ENCODE measurements at regions of chr10 and their contacts with region 1.

Region 1: DNA sequence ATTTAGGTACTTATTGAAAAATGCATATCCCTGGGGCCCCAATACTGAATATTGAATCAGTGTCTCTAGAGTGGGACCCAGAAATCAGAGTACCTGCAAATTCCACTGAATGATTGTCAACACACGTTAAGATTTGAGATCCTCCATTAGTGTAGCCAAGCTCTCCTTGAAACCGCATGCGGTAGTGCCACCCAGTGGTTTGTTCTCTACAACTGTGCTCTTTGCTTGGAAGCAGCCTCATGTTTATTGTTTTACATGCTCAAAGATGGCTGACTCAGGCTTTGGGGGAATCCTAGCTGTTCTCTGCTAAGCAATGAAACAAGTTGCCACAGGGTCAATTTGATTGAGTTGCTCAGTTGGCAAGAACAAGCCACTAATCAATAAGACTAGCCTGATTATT is 340.2 kb upstream of the CELF2 start:
- DNase-seq: peak; percentile 81
- ATAC-seq: peak; percentile 86
- H3K4me3 Mint-ChIP-seq: no peak overlapping the region
- H3K27ac Mint-ChIP-seq: no peak overlapping the region
- H3K4me1 Mint-ChIP-seq: peaks cover 16% of the 10 kb centered on the region
- H3K27me3 Mint-ChIP-seq: peaks cover 2% of the 10 kb centered on the region

Region 2: GRCh38 chr10:9331583-9332008 is 1345.9 kb before region 1 on chr10:
- CTCF ChIA-PET with region 1: no interaction called
- POLR2A ChIA-PET with region 1: no interaction called
- intact Hi-C with region 1: loop called in 1 of 2 experiments (anchors 5 kb)
- DNase-seq: no peak
- ATAC-seq: no peak
- H3K4me3 Mint-ChIP-seq: no peak overlapping the region
- H3K27ac Mint-ChIP-seq: no peak overlapping the region
- H3K4me1 Mint-ChIP-seq: no peaks in the 10 kb centered on the region
- H3K27me3 Mint-ChIP-seq: peaks cover 29% of the 10 kb centered on the region

Region 3: DNA sequence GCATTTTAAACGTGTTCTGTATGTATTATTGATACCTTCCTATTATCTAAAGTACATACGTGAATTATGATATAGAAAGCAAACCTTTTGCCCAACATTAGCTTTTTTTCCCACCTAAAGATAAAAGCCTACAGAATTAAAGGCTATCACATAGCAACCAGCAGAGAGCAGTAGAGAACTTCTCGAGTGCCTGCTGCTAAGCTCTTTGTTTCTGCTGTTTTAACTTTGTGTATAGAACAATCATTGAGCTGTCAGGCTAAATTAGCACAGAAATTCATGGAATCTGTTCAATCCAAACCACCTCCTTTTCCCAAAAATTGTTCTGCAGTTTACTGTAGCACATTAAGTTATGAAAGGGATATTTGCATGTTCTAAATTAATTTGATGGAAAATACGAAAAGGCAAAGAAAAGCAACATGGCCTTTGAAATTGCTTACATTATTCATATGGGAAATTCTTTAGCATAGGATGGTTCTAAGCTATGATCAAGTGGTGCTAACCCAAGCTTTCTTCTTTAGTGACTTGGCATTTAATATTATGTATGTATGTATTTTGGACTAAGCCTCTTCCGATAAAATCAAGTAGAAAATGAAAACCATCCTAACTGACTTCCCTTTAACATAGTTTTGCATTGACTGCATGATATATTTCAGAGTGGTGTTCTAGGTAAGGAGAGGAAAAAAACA is 1334.5 kb before region 1 on chr10:
- CTCF ChIA-PET with region 1: interaction called, 5 read pairs
- POLR2A ChIA-PET with region 1: no interaction called
- intact Hi-C with region 1: loop called in 1 of 2 experiments (anchors 5 kb)
- DNase-seq: no peak
- ATAC-seq: peak; percentile 26
- H3K4me3 Mint-ChIP-seq: no peak overlapping the region
- H3K27ac Mint-ChIP-seq: no peak overlapping the region
- H3K4me1 Mint-ChIP-seq: peaks cover 12% of the 10 kb centered on the region
- H3K27me3 Mint-ChIP-seq: no peaks in the 10 kb centered on the region

Region 4: DNA sequence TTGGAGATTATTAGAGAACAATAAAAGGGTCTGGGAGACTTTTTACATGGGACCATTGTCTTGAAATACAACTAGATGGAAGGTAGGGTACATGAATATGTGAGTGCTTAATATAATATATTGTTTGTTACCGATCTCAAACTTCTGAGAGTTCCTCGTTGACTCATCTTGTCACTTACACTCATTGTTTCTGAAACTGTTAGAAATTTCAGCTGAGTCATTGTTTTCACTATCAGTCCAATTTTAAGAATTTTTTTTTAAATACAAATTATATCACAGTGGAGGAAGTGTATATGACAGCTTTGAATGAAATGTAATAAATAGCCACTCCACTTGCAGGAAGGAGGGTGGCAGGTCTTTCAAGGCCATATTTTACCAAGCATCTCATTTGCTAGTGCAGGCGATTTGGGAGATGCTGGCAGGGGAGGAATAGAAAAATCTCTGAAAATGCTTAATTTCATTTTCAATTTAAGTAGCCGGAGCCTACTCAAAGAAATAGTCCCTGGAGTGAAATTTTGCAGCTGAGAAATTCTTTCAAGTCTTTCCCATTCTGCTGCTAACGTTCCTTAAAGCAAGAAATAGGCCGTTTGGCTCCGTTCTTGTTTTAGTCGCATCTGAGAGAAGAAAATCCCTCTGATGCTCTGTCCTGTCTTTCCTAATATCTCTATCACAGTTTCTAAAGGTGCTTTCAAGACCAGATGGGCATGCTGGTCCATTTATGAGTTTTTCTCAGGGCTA is 1064.0 kb before region 1 on chr10:
- CTCF ChIA-PET with region 1: no interaction called
- POLR2A ChIA-PET with region 1: no interaction called
- intact Hi-C with region 1: loop called in 1 of 2 experiments (anchors 5 kb)
- DNase-seq: peak; percentile 3
- ATAC-seq: peak; percentile 76
- H3K4me3 Mint-ChIP-seq: no peak overlapping the region
- H3K27ac Mint-ChIP-seq: no peak overlapping the region
- H3K4me1 Mint-ChIP-seq: peaks cover 9% of the 10 kb centered on the region
- H3K27me3 Mint-ChIP-seq: peaks cover 29% of the 10 kb centered on the region

Region 5: GRCh38 chr10:10233229-10233628 is 444.2 kb before region 1 on chr10:
- CTCF ChIA-PET with region 1: no interaction called
- POLR2A ChIA-PET with region 1: no interaction called
- intact Hi-C with region 1: loop called in 1 of 2 experiments (anchors 5 kb)
- DNase-seq: no peak
- ATAC-seq: no peak
- H3K4me3 Mint-ChIP-seq: no peak overlapping the region
- H3K27ac Mint-ChIP-seq: no peak overlapping the region
- H3K4me1 Mint-ChIP-seq: no peaks in the 10 kb centered on the region
- H3K27me3 Mint-ChIP-seq: peaks cover 17% of the 10 kb centered on the region

Region 6: DNA sequence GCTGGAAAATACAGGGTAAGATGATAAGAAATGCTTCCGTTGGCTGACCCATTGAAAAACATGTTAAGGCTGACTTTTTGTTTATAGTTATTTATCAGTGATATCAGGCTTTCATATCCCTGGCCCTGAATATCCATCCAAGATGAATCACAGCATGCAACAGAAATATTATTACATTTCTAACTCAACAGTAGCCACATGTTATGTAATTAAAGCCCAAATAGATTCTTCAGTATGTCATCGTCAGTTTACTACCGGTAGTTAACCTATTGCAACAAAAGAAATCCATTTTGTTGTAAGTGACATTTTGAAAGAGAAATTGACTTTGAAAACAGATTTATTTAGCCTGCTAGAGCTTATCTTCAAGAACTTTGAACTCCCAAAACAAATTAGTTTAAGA is 13.9 kb before region 1 on chr10:
- CTCF ChIA-PET with region 1: interaction called, 11 read pairs
- POLR2A ChIA-PET with region 1: no interaction called
- intact Hi-C with region 1: no loop called
- DNase-seq: no peak
- ATAC-seq: no peak
- H3K4me3 Mint-ChIP-seq: no peak overlapping the region
- H3K27ac Mint-ChIP-seq: no peak overlapping the region
- H3K4me1 Mint-ChIP-seq: no peaks in the 10 kb centered on the region
- H3K27me3 Mint-ChIP-seq: peaks cover 17% of the 10 kb centered on the region

Measured in activated CD4-positive, alpha-beta T cell treated with anti-CD3 and anti-CD28 coated beads for 36 hours (primary cell).